Tibial artery (tissue), 4 donors: ENCODE measurements at regions of chr19 and their contacts with region 1.

Region 1: DNA sequence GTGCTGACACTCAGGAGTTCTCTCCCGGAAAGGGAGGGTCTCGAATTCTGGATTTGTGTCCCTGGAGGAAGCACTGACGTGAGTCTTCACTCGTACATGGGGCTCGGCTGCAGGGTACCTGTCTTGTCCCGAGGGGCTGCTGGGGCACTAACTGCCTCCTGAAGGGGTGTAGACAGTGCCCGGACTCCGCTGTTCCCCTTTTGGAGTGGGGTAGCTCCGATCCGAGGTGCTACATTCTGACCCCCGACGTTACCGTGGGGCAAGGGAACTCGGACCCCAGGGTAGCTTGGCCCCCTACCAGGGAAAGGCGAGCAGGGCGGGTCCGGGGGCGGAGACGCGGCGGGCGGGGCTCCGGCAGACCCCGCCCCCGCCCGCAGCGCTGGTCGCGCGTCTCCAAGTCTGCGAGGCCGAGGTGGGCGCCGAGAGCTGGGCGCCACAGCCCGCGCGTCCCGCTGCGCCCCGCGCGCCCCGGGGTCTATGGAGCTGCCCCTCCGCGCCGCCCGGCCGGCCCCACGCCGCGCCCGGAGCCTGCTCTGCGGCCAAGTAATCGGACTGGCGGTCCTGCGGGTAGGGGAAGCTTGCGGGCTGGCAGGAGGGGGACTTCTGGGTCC is at the start of gene NPAS1:
- DNase-seq: no peak
- H3K4me3 ChIP-seq: peak within 1 kb of the TSS; percentile 17 to 43
- H3K27ac ChIP-seq: no peak within 1 kb of the TSS
- H3K4me1 ChIP-seq: peaks cover 0 to 46% (median 30%) of the 10 kb centered on the region in 4 donors
- H3K27me3 ChIP-seq: peaks cover 0 to 44% of the 10 kb centered on the region in 2 donors
- CTCF ChIP-seq: no peak

Region 2: DNA sequence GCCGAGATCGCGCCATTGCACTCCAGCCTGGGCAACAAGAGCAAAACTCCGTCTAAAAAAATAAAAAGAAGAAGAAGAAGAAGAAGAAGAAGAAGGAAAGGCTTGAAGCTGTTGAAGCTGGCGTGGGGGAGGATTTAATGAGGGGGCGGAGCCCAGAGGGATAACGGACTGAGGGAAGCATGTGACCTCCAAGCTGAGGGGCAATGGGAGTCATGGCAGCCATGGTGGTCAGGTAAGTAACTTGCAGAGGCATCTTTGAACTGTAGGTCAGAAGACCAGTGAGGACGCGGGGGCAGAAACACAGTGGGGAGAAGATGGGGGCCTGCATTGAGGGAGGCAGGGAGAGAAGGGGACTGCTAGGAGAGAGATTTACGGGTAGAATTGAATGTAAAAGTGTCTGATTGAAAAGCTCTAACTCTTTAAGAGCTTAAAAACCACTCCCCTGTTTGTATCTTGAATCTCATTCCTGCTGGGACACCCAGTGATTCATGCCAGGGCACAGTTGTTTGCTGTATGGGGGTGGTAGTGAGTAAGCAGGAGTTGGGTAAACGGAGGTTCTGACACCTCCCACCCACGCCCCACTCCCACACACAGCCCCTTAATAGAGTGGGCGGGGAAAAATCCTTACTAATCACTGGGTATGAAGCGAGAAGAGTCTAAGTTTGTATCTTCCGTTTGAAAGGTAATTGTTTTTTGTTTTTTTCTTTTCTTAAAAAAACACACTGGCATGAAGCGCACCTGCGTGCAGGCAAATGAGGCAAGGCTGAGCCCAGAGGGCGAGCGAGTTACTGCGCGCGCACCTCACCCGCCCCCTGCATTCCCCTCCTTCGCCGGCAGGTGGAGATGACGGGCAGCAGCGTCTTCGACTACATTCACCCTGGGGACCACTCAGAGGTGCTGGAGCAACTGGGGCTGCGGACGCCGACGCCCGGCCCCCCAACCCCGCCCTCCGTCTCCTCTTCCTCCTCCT is 15.9 kb after region 1 on chr19:
- intact Hi-C with region 1: no loop called
- DNase-seq: peak; percentile 79 to 89
- H3K4me3 ChIP-seq: peak overlapping the region; percentile 44 to 52
- H3K27ac ChIP-seq: peak overlapping the region in 1 of 2 donors; percentile 14
- H3K4me1 ChIP-seq: peaks cover 0 to 14% (median 13%) of the 10 kb centered on the region in 4 donors
- H3K27me3 ChIP-seq: peaks cover 0 to 22% of the 10 kb centered on the region in 2 donors
- CTCF ChIP-seq: peak; percentile 98

Region 3: GRCh38 chr19:47124937-47125668 is 105.6 kb after region 1 on chr19:
- intact Hi-C with region 1: loop called (anchors 10 kb)
- DNase-seq: no peak
- H3K4me3 ChIP-seq: no peak overlapping the region
- H3K27ac ChIP-seq: no peak overlapping the region
- H3K4me1 ChIP-seq: peaks cover 0 to 21% (median 9%) of the 10 kb centered on the region in 4 donors
- H3K27me3 ChIP-seq: no peaks in the 10 kb centered on the region
- CTCF ChIP-seq: peak; percentile 69 to 90